ENCODE measurements at regions of chr1 and their contacts with region 1.

Region 1: DNA sequence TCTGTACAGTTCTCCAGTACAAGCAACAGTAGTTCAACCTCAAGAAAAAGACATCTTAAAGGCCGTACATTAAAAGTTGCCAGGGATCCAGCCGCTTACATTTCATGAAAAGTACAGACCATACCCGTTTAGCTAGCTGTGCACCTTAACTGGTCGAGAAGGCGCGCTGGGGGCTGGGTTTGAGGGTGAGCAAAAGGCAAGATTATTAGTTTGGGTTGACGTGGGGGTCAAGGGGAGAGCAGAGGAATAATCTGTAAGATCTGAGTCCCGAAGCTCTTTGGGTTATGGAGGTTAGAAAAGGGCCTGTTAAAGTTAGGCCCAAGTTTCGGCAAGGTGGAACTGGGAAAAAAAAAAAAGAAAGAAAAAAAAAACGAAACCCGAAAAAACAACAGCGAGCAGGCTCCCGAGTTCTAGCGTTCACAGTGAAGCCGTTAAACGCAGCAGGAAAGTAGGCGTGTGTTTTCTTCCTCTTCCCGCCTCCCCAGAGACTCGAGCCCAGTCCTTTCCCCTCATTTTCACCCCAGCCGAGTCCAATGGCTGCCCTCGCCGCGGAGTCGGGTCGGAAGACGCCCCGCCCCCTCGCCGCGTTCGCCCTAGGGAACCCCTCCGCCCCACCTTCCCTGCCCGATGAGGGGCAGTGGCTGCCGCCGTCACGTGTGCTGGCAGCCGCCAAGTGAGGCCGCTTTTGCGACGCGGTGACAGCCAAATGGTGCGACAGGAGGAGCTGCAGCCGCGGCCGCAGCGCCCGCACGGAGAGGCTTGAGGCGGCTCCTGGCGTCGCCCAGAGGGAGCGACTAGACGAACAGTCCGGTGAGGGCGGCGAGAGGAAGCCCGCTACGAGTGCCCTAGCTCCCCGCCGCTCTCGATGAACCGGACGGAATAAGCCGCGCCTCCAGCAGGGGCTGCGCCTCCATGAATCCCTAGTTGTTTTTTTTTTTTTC is at the start of gene PKN2:
- DNase-seq: peak; percentile 98 to 99
- ATAC-seq: peak; percentile 98 to 99 (median 99)
- H3K4me3 ChIP-seq: peak within 1 kb of the TSS; percentile 76
- H3K27ac ChIP-seq: peak within 1 kb of the TSS; percentile 94
- H3K4me1 ChIP-seq: peaks cover 34% of the 10 kb centered on the region
- H3K27me3 ChIP-seq: no peaks in the 10 kb centered on the region
- CTCF ChIP-seq: peak; percentile 25
- total RNA-seq, gene PKN2: 16.7 to 21.2 (median 19.2) TPM

Region 2: GRCh38 chr1:88634538-88634937 is 49.3 kb before region 1 on chr1:
- intact Hi-C with region 1: no loop called
- DNase-seq: no peak
- ATAC-seq: no peak
- H3K4me3 ChIP-seq: no peak overlapping the region
- H3K27ac ChIP-seq: no peak overlapping the region
- H3K4me1 ChIP-seq: no peaks in the 10 kb centered on the region
- H3K27me3 ChIP-seq: peaks cover 0 to 2% (median 0%) of the 10 kb centered on the region in 3 donors
- CTCF ChIP-seq: no peak

Region 3: DNA sequence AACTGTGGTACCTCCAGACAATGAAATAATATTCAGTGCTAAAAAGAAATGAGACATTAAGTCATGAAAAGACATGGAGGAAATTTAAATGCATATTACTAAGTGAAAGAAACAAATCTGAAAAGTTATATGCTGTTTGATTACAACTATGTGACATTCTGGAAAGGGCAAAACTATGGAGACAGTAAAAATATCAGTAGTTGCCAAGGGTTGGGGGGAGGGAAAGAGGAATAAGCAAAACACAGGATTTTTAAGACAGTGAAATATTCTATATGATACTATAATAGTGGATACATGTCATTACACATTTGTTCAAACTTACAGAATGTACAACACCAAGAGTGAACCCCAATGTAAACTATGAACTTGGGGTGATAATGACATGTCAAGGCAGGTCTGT is 37.9 kb before region 1 on chr1:
- intact Hi-C with region 1: no loop called
- DNase-seq: no peak
- ATAC-seq: no peak
- H3K4me3 ChIP-seq: no peak overlapping the region
- H3K27ac ChIP-seq: no peak overlapping the region
- H3K4me1 ChIP-seq: no peaks in the 10 kb centered on the region
- H3K27me3 ChIP-seq: no peaks in the 10 kb centered on the region
- CTCF ChIP-seq: no peak

Region 4: DNA sequence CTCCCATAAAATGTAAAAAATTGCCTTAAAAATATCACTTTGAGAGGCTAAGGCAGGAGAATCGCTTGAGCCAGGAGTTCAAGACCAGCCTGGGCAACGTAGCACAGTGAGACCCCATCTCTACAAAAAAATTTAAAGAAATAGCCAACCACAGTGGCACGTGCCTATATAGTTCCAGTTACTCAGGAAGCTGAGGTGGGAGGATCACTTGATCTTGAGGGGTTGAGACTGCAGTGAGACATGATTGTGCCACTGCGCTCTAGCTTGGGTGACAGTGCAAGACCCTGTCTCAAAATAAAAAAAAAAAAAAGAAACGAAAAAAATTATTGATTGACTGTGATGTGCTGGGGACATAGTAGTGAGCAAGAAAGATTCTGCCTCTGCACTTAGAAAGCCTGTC is 38.7 kb after region 1 on chr1:
- intact Hi-C with region 1: loop called in 1 of 2 experiments (anchors 5 kb)
- DNase-seq: no peak
- ATAC-seq: no peak
- H3K4me3 ChIP-seq: no peak overlapping the region
- H3K27ac ChIP-seq: no peak overlapping the region
- H3K4me1 ChIP-seq: peaks cover 4% of the 10 kb centered on the region
- H3K27me3 ChIP-seq: no peaks in the 10 kb centered on the region
- CTCF ChIP-seq: no peak

Region 5: GRCh38 chr1:88741413-88741812 is 57.6 kb after region 1 on chr1:
- intact Hi-C with region 1: no loop called
- DNase-seq: no peak
- ATAC-seq: no peak
- H3K4me3 ChIP-seq: no peak overlapping the region
- H3K27ac ChIP-seq: no peak overlapping the region
- H3K4me1 ChIP-seq: no peaks in the 10 kb centered on the region
- H3K27me3 ChIP-seq: no peaks in the 10 kb centered on the region
- CTCF ChIP-seq: no peak

Region 6: GRCh38 chr1:88891318-88891950 is 207.6 kb after region 1 on chr1 and contains the start of gene GTF2B:
- intact Hi-C with region 1: loop called in 1 of 2 experiments (anchors 10 kb)
- DNase-seq: peak; percentile 91 to 94
- ATAC-seq: peak; percentile 94 to 96 (median 94)
- H3K4me3 ChIP-seq: peak within 1 kb of the TSS; percentile 91
- H3K27ac ChIP-seq: peak within 1 kb of the TSS; percentile 96
- H3K4me1 ChIP-seq: peaks cover 20% of the 10 kb centered on the region
- H3K27me3 ChIP-seq: no peaks in the 10 kb centered on the region
- CTCF ChIP-seq: no peak
- total RNA-seq, gene GTF2B: 11.8 to 16.2 (median 14.2) TPM

Measured in psoas muscle (tissue), 8 donors.